Right cardiac atrium (tissue), 5 donors: ENCODE measurements at regions of chr5 and their contacts with region 1.

Region 1: DNA sequence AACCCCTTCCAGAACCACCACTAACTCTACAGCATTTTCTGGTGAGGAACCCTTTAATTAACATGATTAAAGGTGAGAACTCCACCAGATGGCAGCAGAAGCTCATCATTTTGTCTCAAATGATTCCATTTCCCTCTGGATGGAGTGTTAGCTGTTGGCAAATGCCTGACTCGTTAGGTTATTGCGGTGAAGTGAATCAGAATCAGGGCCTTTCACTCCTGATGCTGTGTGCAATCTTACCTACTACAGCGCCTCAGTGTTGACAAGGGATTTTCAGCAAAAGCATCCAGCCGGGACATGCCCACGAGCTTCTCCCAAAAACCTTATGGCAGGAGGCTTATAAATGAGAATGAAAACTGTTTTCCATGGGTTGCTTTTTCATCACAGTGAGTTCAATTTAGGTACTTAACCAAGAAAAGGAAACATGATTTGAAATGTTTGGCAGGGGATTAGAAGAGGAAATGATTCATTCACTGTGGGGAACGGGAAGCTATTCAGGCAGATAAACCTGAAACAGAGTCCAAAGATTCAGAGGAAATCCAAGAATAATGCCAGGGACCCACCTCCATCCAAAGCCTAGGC is 48.0 kb upstream of the CAST start:
- DNase-seq: peak in 2 of 3 donors; percentile 41
- ATAC-seq: peak; percentile 80 to 94
- H3K4me3 ChIP-seq: no peak overlapping the region
- H3K27ac ChIP-seq: peak overlapping the region; percentile 19
- H3K4me1 ChIP-seq: peaks cover 4% of the 10 kb centered on the region
- H3K27me3 ChIP-seq: no peaks in the 10 kb centered on the region

Region 2: DNA sequence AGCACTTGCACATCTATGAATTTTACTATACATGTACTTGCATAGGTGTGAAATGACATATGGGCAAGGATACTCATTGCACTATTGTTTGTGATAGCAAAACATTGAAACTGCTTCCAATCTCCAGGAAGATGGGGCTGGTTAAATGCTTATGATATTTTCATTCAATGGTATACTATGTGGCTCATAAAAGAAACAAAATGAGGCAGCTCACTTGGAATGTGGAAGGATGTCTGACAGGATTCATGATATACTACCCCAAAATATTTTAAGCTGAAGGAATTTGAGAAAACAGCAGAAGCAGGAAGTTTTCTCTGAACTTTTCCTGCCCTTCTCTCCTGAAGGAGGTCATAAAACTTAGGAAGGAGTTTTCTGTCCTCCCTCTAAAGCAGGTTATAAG is 51.6 kb before region 1 on chr5:
- intact Hi-C with region 1: no loop called
- DNase-seq: no peak
- ATAC-seq: no peak
- H3K4me3 ChIP-seq: no peak overlapping the region
- H3K27ac ChIP-seq: no peak overlapping the region
- H3K4me1 ChIP-seq: no peaks in the 10 kb centered on the region
- H3K27me3 ChIP-seq: no peaks in the 10 kb centered on the region

Region 3: GRCh38 chr5:96687812-96688453 is 73.7 kb after region 1 on chr5:
- intact Hi-C with region 1: loop called in 1 of 4 experiments (anchors 10 kb)
- DNase-seq: no peak
- ATAC-seq: peak; percentile 82 to 84
- H3K4me3 ChIP-seq: no peak overlapping the region
- H3K27ac ChIP-seq: no peak overlapping the region
- H3K4me1 ChIP-seq: no peaks in the 10 kb centered on the region
- H3K27me3 ChIP-seq: no peaks in the 10 kb centered on the region

Region 4: DNA sequence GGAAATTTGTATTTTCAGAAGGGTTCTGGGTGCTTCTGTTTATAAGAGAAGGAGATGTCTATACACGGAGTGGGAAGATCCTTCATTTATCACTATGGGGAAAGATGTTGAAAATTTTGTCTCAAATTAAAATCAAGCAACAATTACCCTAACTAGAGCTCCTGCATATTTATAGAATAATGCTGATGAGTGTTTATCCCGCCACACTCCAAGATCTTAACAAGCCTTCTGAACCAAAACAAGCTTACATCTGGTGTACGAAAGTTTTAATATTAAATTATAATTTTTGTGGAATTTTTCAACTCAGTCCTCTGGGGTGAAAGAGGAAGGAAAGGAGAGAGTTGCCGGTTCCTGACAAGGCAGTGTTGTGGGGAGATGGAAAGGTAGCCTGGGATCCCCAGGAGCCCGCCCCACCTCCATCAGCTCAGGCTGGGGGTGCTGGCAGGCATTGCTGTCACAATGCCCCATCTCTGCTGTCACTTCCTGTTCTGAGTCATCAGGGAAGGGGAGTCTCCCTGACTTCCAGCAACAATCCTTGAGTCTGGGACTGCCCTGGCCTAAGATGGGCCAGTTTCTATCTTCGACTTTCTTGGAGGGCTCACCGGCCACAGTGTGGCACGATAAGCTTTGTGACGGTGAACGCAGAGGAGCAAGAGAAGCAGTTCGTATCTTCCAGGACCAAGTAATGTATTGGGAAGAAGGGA is 129.0 kb after region 1 on chr5:
- intact Hi-C with region 1: loop called in 2 of 4 experiments (anchors 10 kb)
- DNase-seq: peak; percentile 39 to 66 (median 61)
- ATAC-seq: peak; percentile 59 to 86
- H3K4me3 ChIP-seq: no peak overlapping the region
- H3K27ac ChIP-seq: peak overlapping the region; percentile 97
- H3K4me1 ChIP-seq: peaks cover 6% of the 10 kb centered on the region
- H3K27me3 ChIP-seq: no peaks in the 10 kb centered on the region